ENCODE measurements at regions of chr3 and their contacts with region 1.

Region 1: GRCh38 chr3:190721330-190721729 is 141.2 kb downstream of the GMNC start:
- DNase-seq: no peak
- H3K4me3 ChIP-seq: no peak overlapping the region
- H3K27ac ChIP-seq: no peak overlapping the region
- H3K4me1 ChIP-seq: no peaks in the 10 kb centered on the region
- H3K27me3 ChIP-seq: no peaks in the 10 kb centered on the region
- CTCF ChIP-seq: no peak
- EP300 ChIP-seq: no peak
- POLR2A ChIP-seq: no peak

Region 2: DNA sequence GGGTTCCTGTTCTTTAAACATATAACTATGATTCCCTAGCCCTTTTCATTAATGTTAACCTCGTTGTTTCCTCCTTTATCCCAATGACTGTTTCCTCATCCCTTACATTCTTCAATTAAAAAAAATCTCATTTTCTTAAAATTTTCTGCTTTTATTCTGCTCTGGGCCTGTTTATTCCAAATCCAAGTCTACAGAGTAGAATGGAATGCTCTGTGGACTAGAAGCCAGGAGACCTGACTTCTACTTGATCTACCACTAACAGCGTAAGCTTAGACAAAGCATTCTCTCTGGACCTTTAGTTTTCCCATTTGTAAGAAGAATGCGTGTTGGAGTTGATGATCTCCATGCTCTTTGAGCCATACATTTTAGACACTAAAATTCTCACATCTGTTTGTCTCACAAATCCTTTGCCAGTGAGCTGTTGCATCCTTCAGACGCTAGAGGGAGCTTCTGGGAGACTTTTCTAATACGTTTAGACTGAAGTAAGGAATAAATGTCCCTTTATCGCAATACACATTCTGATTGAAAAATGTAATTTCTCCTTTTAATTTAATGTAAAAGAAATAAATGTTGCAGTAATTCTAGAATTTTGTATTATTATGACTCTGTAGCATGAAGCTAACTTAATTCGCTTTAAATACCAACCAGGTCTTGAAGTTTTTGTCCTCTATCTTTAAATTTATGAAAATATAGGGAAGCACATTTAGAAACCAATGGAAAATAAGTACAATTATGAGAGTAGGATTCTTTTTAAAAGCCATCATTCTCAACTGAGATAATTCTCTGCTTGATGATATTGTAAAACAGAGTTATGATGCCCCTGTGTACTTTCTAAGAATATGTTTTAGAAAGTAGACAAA is 162.9 kb after region 1 on chr3:
- intact Hi-C with region 1: loop called in 1 of 4 experiments (anchors 10 kb)
- DNase-seq: peak; percentile 17 to 48 (median 35)
- H3K4me3 ChIP-seq: no peak overlapping the region
- H3K27ac ChIP-seq: no peak overlapping the region
- H3K4me1 ChIP-seq: no peaks in the 10 kb centered on the region
- H3K27me3 ChIP-seq: no peaks in the 10 kb centered on the region
- CTCF ChIP-seq: peak in 2 of 3 donors; percentile 40 to 44
- EP300 ChIP-seq: no peak
- POLR2A ChIP-seq: no peak

Region 3: DNA sequence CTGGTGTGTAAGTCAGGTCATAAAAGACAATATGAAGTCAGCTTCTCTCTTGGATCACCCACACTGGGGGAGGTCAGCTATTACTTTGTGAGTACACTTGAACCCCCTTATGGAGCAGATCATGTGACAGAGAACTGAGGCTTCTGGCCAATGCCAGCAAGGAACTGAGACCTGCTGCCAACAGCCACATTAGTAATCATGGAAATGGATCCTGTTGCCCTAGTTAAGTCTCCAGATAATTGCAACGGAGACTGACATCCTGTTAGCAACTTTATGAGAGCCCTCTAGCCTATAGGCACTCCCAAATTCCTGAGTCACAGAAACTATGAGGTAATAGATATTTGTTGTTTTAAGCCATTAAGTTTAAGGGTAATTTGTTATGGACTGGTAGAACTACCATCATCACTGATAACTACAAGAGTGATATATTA is 251.5 kb after region 1 on chr3:
- intact Hi-C with region 1: no loop called
- DNase-seq: no peak
- H3K4me3 ChIP-seq: no peak overlapping the region
- H3K27ac ChIP-seq: no peak overlapping the region
- H3K4me1 ChIP-seq: no peaks in the 10 kb centered on the region
- H3K27me3 ChIP-seq: no peaks in the 10 kb centered on the region
- CTCF ChIP-seq: no peak
- EP300 ChIP-seq: no peak
- POLR2A ChIP-seq: no peak

Region 4: DNA sequence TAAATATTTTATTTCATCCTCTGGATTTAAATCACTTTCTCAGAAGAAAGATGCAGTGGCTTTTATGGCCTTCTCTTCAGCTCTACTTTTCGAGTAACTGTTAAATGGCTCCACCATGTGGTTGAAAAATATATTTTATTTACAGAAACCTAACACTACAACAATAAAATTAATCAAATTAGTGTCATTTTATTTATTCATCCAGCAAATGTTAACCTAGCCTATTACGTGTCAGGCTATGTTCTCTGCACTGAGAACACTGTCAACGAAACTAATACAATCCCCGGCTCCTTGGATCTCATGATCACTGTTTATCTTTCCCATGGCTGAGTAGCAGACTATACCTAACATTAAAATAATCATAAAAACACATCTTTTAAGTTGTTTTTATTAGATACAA is 329.7 kb after region 1 on chr3:
- intact Hi-C with region 1: loop called in 2 of 4 experiments (anchors 10 kb)
- DNase-seq: no peak
- H3K4me3 ChIP-seq: no peak overlapping the region
- H3K27ac ChIP-seq: no peak overlapping the region
- H3K4me1 ChIP-seq: no peaks in the 10 kb centered on the region
- H3K27me3 ChIP-seq: no peaks in the 10 kb centered on the region
- CTCF ChIP-seq: peak; percentile 22 to 30 (median 27)
- EP300 ChIP-seq: no peak
- POLR2A ChIP-seq: no peak

Measured in ovary (tissue), 10 donors.